ENCODE measurements at regions of chr3 and their contacts with region 1.

Region 1: GRCh38 chr3:72447059-72447946 is 400.9 kb downstream of the SHQ1 start:
- DNase-seq: peak; percentile 93
- H3K4me3 Mint-ChIP-seq: peak overlapping the region; percentile 61
- H3K27ac Mint-ChIP-seq: no peak overlapping the region
- H3K4me1 Mint-ChIP-seq: peaks cover 34% of the 10 kb centered on the region
- H3K27me3 Mint-ChIP-seq: peaks cover 23% of the 10 kb centered on the region

Region 2: DNA sequence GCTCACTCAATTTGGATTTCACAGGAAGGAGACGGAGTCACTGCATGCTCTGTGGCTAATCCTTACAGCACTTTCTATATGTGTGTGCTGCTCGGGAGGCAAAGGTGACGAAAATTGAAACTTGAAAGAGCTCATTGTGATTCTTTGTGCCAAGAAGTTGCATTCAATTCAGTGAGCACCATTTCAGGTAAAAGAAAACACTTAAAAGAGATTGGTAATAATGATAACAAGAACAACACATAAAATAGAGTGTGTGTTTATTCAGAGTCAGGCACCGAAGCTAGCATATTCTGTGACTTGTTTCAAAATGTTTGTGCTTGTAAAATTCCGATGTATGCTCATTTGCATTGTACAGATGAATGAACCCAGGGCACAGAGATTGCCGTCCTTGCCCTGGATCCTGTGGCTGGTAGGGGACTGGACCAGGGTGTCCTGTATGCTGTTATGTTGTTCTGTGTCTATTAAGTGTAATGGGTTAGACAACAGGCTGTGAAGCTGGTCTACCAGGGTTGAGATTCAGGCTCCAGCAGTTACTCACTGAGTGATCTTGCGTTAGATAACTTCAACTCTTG is 469.1 kb before region 1 on chr3:
- CTCF ChIA-PET with region 1: no interaction called
- POLR2A ChIA-PET with region 1: interaction called, 3 read pairs
- intact Hi-C with region 1: loop called (anchors 10 kb)
- DNase-seq: peak; percentile 67
- H3K4me3 Mint-ChIP-seq: peak overlapping the region; percentile 38
- H3K27ac Mint-ChIP-seq: peak overlapping the region; percentile 88
- H3K4me1 Mint-ChIP-seq: peaks cover 44% of the 10 kb centered on the region
- H3K27me3 Mint-ChIP-seq: peaks cover 19% of the 10 kb centered on the region